Naive thymus-derived CD8-positive, alpha-beta T cell (primary cell): ENCODE measurements at regions of chr4 and their contacts with region 1.

Region 1: GRCh38 chr4:10116580-10117358 is at the start of gene WDR1:
- DNase-seq: peak; percentile 80 to 97 (median 88)
- ATAC-seq: peak; percentile 72 to 76
- H3K4me3 Mint-ChIP-seq: peak within 1 kb of the TSS; percentile 92 to 98 (median 96)
- H3K27ac Mint-ChIP-seq: peak within 1 kb of the TSS; percentile 96 to 100 (median 99)
- H3K4me1 Mint-ChIP-seq: peaks cover 52 to 84% (median 70%) of the 10 kb centered on the region in 4 donors
- H3K27me3 Mint-ChIP-seq: no peaks in the 10 kb centered on the region
- polyA plus RNA-seq, gene WDR1: 304 to 378 (median 322) TPM

Region 2: GRCh38 chr4:10096201-10096977 is 20.4 kb before region 1 on chr4:
- POLR2A ChIA-PET with region 1: interaction called, 349 read pairs
- DNase-seq: peak; percentile 44 to 84 (median 67)
- ATAC-seq: peak; percentile 72 to 75
- H3K4me3 Mint-ChIP-seq: peak overlapping the region; percentile 6 to 76 (median 56)
- H3K27ac Mint-ChIP-seq: peak overlapping the region; percentile 70 to 97 (median 90)
- H3K4me1 Mint-ChIP-seq: peaks cover 52 to 98% (median 93%) of the 10 kb centered on the region in 4 donors
- H3K27me3 Mint-ChIP-seq: no peaks in the 10 kb centered on the region

Region 3: DNA sequence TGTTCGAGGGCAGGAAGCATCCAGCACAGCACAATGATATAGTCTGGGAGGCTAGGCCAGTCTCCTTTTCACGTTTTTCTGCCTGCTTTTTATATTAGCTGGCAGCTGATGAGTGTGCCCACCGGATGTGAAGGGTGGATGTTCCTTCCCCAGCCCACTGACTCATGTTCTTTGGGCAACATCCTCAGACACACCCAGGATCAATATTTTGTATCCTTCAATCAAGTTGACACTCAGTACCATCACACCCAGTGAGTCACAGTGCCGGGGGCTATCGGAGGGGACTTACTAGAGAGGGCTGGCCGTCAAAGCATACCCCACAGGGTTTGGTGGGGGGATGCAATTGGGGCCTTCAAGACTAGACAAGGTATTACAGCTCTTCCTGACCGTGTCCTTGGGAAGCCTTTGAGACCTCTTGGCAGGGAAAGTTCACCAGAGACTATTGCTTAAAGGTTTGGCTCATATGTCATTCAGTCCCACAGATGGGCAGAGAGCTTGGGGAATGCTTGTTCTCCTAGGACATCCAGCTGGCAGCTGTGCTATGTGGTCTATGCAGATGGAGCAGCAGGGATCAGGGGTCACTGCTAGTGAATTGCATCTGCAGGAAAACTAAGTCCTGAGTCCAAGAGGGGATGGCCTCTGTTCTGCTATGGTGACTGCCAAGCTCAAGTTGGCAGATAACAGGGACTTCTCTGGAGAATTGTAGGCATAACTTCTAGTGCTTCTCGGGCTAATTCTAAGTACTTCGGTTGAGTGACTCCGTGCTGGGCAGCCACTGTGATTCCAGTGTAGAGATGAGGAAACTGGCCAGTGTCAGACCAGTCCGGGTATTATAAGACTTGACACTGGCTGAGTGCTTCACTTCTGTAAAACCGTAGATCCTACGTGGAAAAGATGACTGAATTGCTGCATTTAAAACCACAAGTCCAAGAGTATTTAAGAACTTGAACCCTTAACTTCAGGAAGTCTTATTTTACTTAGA is 12.7 kb after region 1 on chr4:
- POLR2A ChIA-PET with region 1: interaction called, 24 read pairs
- DNase-seq: no peak
- ATAC-seq: no peak
- H3K4me3 Mint-ChIP-seq: no peak overlapping the region
- H3K27ac Mint-ChIP-seq: peak overlapping the region in 2 of 10 donors; percentile 32 to 77
- H3K4me1 Mint-ChIP-seq: peaks cover 10 to 20% (median 15%) of the 10 kb centered on the region in 4 donors
- H3K27me3 Mint-ChIP-seq: peaks cover 0 to 2% (median 0%) of the 10 kb centered on the region in 5 donors

Region 4: GRCh38 chr4:10413177-10413576 is 296.4 kb after region 1 on chr4:
- POLR2A ChIA-PET with region 1: interaction called, 18 read pairs
- DNase-seq: no peak
- ATAC-seq: no peak
- H3K4me3 Mint-ChIP-seq: no peak overlapping the region
- H3K27ac Mint-ChIP-seq: peak overlapping the region in 6 of 10 donors; percentile 2 to 79 (median 24)
- H3K4me1 Mint-ChIP-seq: peaks cover 25 to 45% (median 40%) of the 10 kb centered on the region in 4 donors
- H3K27me3 Mint-ChIP-seq: no peaks in the 10 kb centered on the region